HepG2 (cell line): ENCODE measurements at regions of chr1 and their contacts with region 1.

Region 1: GRCh38 chr1:231357831-231358354 is 19.8 kb downstream of the SPRTN start:
- DNase-seq: peak; percentile 47
- ATAC-seq: peak; percentile 73
- H3K4me3 ChIP-seq: no peak overlapping the region
- H3K27ac ChIP-seq: no peak overlapping the region
- H3K4me1 ChIP-seq: peaks cover 7% of the 10 kb centered on the region; the same call in 1 of the 2 replicates
- H3K27me3 ChIP-seq: no peaks in the 10 kb centered on the region
- CTCF ChIP-seq: peak; percentile 89
- EP300 ChIP-seq: no peak
- POLR2A ChIP-seq: no peak
- RAD21 ChIP-seq: peak; percentile 61

Region 2: DNA sequence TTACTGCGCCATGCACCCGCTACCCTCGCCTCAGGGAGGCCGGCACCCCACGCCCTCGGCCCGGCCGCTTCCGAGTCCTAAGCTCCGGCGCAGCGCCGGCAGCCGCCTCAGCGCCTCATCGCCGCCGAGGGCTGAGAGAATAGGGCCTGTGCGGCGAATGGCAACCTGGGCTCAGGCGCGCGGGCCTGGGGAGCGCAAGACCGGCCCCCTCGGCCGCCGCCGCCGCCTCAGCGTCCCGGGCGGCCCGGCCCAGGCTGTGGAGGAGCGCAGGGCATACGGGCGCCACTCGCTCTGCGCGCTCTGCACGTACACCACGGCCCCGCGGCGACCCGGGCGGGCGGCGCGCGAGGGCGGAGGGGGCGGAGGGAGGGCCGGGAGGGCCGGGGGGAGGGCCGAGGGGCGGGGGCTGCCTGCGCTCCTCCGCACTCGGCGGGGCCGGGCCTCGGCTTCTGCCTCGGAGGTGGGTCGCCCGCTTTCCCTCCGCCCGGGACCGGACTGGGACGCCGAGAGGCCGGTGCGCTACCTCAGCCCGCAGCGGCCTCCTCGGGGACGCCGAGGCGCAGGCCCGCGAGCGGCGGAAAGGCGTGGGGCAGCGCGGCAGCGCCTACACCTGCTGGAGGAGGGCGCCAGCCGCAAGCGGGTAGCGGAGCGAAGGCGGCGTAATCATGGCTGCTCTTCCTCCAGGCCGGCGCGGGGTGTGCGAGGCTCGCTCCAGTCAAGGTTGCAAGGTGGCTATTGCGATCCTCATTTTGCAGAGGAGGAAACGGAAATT is 64.3 kb after region 1 on chr1 and contains the start of gene EGLN1:
- CTCF ChIA-PET with region 1: no interaction called
- POLR2A ChIA-PET with region 1: no interaction called
- in situ Hi-C with region 1: no loop called
- intact Hi-C with region 1: loop called (anchors 2 kb)
- DNase-seq: peak; percentile 82
- ATAC-seq: peak; percentile 89
- H3K4me3 ChIP-seq: peak within 1 kb of the TSS; percentile 89 to 100 (median 99)
- H3K27ac ChIP-seq: peak within 1 kb of the TSS; percentile 99
- H3K4me1 ChIP-seq: peaks cover 24% of the 10 kb centered on the region
- H3K27me3 ChIP-seq: no peaks in the 10 kb centered on the region; a peak in 1 of 5 replicates
- CTCF ChIP-seq: peak; percentile 69
- EP300 ChIP-seq: peak in 1 of 2 experiments; percentile 36; a peak in 1 of 4 replicates
- POLR2A ChIP-seq: peak; percentile 85 to 90
- RAD21 ChIP-seq: peak; percentile 83
- total RNA-seq, gene EGLN1: 34.4 and 38.2 TPM in 2 replicates

Region 3: GRCh38 chr1:231550448-231550781 is 192.5 kb after region 1 on chr1:
- CTCF ChIA-PET with region 1: interaction called, 20 read pairs
- POLR2A ChIA-PET with region 1: no interaction called
- in situ Hi-C with region 1: no loop called
- intact Hi-C with region 1: loop called (anchors 1 kb)
- DNase-seq: peak; percentile 50
- ATAC-seq: peak; percentile 92
- H3K4me3 ChIP-seq: no peak overlapping the region
- H3K27ac ChIP-seq: no peak overlapping the region
- H3K4me1 ChIP-seq: peaks cover 10% of the 10 kb centered on the region
- H3K27me3 ChIP-seq: no peaks in the 10 kb centered on the region
- CTCF ChIP-seq: peak; percentile 59
- EP300 ChIP-seq: no peak
- POLR2A ChIP-seq: no peak
- RAD21 ChIP-seq: peak; percentile 57

Region 4: GRCh38 chr1:231584124-231584523 is 226.2 kb after region 1 on chr1:
- CTCF ChIA-PET with region 1: interaction called, 3 read pairs
- POLR2A ChIA-PET with region 1: no interaction called
- in situ Hi-C with region 1: no loop called
- intact Hi-C with region 1: loop called (anchors 1 kb)
- DNase-seq: peak; percentile 47
- ATAC-seq: peak; percentile 58; the same call in 2 of the 3 replicates
- H3K4me3 ChIP-seq: no peak overlapping the region
- H3K27ac ChIP-seq: no peak overlapping the region
- H3K4me1 ChIP-seq: no peaks in the 10 kb centered on the region
- H3K27me3 ChIP-seq: no peaks in the 10 kb centered on the region
- CTCF ChIP-seq: peak; percentile 70
- EP300 ChIP-seq: no peak
- POLR2A ChIP-seq: no peak
- RAD21 ChIP-seq: 0 out of 2 replicates have a peak, but pooled peaks have one; percentile 17

Region 5: DNA sequence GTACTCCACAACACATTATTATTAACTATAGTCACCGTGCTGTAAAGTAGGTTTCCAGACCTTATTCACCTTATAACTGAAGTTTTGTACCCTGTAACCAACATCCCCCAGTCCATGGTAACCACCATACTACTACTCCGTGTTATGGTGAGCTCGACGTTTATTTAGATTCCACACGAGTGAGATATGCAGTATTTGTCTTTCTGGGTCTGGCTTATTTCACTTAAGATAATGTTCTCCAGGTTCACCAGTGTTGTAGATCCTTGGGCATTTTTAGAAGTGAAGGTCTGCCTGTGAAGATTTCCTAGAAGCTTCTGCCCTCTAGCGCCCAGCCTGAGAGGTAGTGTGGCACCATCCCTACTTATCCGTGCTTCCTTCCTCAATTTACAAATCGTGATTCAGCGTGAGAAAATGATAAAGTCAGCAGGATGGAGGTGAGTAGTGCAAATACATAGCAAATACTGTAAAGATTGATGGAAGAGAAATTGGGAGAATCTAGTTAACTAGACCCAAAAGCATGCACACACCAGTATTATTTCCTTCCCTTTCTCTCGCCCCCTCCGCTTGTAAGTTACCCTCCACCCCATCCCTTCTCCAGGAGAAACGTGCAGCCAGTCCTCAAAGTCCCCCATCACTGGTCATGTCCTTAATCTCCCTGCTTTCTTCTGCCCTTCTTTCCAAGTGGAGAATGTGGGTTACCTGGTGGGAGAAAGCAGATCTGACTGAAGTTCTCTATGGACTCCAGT is 232.7 kb after region 1 on chr1:
- CTCF ChIA-PET with region 1: interaction called, 23 read pairs
- POLR2A ChIA-PET with region 1: no interaction called
- in situ Hi-C with region 1: no loop called
- intact Hi-C with region 1: loop called (anchors 1 kb)
- DNase-seq: peak; percentile 44
- ATAC-seq: peak; percentile 90
- H3K4me3 ChIP-seq: no peak overlapping the region
- H3K27ac ChIP-seq: no peak overlapping the region
- H3K4me1 ChIP-seq: peaks cover 3% of the 10 kb centered on the region; the same call in 1 of the 2 replicates
- H3K27me3 ChIP-seq: no peaks in the 10 kb centered on the region
- CTCF ChIP-seq: peak; percentile 83
- EP300 ChIP-seq: no peak
- POLR2A ChIP-seq: no peak
- RAD21 ChIP-seq: peak; percentile 39; the same call in 1 of the 2 replicates

Region 6: GRCh38 chr1:231603598-231604275 is 245.8 kb after region 1 on chr1:
- CTCF ChIA-PET with region 1: interaction called, 15 read pairs
- POLR2A ChIA-PET with region 1: no interaction called
- in situ Hi-C with region 1: loop called (anchors 5 kb)
- intact Hi-C with region 1: no loop called
- DNase-seq: peak; percentile 69
- ATAC-seq: peak; percentile 88
- H3K4me3 ChIP-seq: peak overlapping the region; percentile 55 to 77 (median 75)
- H3K27ac ChIP-seq: peak overlapping the region; percentile 9
- H3K4me1 ChIP-seq: peaks cover 12% of the 10 kb centered on the region; the same call in 1 of the 2 replicates
- H3K27me3 ChIP-seq: no peaks in the 10 kb centered on the region
- CTCF ChIP-seq: peak; percentile 65
- EP300 ChIP-seq: no peak
- POLR2A ChIP-seq: no peak
- RAD21 ChIP-seq: peak; percentile 61

Region 7: DNA sequence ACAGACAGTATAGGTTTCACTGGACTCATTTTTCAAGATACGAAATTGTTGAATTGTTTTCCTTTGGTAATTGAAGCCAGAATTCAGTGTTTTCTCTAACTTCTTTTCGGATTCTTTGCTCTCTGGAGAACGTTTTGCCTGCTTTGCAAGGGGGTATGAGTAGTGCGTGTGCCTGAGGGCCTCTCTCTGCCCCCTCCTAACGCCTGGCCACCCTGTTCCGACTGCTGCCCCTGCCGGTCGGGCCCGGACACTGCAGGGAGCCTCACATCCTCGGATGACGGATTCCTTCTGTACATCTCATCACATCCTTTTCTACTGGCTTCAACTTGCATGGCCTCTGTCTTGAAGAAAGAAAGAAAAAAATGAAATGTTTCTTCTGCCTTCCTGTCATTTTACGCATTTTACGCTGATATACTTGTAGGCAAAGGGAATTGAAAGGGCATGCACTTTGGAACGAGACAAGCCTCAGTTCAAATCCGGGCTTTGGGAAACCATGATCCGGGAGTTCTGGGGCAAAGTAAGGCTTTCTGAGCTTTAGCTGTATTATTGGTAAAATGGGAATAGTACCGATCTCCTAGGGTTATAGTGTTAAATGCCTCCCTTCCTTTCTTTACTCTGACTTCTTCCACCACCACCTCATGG is 333.8 kb after region 1 on chr1:
- CTCF ChIA-PET with region 1: no interaction called
- POLR2A ChIA-PET with region 1: no interaction called
- in situ Hi-C with region 1: no loop called
- intact Hi-C with region 1: loop called (anchors 2 kb)
- DNase-seq: peak; percentile 31
- ATAC-seq: peak; percentile 94
- H3K4me3 ChIP-seq: peak overlapping the region in 1 of 3 experiments; percentile 25; a peak in 1 of 6 replicates
- H3K27ac ChIP-seq: no peak overlapping the region
- H3K4me1 ChIP-seq: peaks cover 29% of the 10 kb centered on the region
- H3K27me3 ChIP-seq: no peaks in the 10 kb centered on the region
- CTCF ChIP-seq: peak; percentile 83
- EP300 ChIP-seq: no peak
- POLR2A ChIP-seq: no peak
- RAD21 ChIP-seq: peak; percentile 37; the same call in 1 of the 2 replicates

Region 8: DNA sequence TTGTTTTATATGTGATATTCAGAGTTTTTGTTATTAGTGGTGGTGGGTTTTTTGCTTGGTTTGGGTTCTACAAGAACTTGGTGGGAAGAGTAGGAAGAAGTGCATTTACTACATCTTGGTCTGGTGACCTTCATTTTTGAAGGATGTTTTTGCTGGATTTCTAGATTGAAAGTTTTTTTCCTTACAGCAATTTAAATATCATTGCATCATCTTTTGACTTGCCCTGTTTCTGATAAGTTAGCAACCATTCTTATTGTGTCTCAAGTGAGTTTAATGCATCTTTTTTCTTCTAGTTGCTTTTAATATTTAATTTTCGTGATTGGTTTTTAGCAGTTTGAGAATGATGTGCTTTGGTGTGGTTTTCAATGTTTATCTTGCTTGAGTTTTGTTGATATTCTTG is 716.4 kb after region 1 on chr1:
- CTCF ChIA-PET with region 1: no interaction called
- POLR2A ChIA-PET with region 1: no interaction called
- in situ Hi-C with region 1: no loop called
- intact Hi-C with region 1: no loop called
- DNase-seq: no peak
- ATAC-seq: no peak
- H3K4me3 ChIP-seq: no peak overlapping the region
- H3K27ac ChIP-seq: no peak overlapping the region
- H3K4me1 ChIP-seq: no peaks in the 10 kb centered on the region
- H3K27me3 ChIP-seq: no peaks in the 10 kb centered on the region; a peak in 1 of 5 replicates
- CTCF ChIP-seq: no peak
- EP300 ChIP-seq: no peak
- POLR2A ChIP-seq: no peak
- RAD21 ChIP-seq: no peak